ENCODE measurements at regions of chr2 and their contacts with region 1.

Region 1: DNA sequence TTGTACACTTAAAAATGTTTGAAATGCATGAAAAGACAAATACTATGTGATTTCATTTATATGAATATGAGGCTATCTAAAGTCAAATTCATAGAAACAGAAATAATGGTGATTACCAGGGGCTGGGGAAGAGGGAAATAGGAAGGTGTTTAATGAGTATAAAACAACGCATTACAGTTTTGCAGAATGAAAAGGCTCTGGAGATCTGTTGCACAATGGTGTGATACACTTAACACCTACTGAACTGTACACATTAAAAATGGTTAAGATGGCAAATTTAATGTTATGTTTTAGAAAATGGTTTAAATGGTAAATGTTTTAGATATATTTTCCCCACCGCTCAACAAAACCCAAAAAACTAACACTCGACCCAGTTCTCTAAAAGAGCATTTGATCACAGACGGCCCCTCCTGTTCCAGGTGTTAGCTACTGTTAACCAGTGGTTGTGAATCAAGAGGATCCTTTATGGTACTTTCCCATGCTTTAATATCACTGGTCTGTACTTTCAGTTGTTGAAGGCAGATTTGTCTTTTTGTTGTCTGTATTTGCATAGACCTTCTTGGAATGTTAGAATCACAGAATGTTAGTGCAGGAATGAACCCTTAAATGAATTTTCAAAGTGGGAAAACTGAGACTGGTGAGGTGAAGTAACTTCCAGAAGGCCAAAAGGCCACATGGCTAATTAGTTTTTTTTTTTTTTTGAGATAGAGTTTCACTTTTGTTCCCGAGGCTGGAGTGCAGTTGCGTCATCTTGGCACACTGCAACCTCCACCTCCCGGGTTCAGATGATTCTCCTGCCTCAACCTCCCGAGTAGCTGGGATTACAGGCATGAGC is 10.2 kb downstream of the RAB10 start:
- DNase-seq: no peak
- ATAC-seq: peak; percentile 86
- H3K4me3 ChIP-seq: peak overlapping the region; percentile 55; the same call in 1 of the 2 replicates
- H3K27ac ChIP-seq: peak overlapping the region; percentile 76
- H3K4me1 ChIP-seq: peaks cover 6% of the 10 kb centered on the region; the same call in 1 of the 2 replicates
- H3K27me3 ChIP-seq: no peaks in the 10 kb centered on the region
- CTCF ChIP-seq: no peak
- EP300 ChIP-seq: no peak
- POLR2A ChIP-seq: no peak
- RAD21 ChIP-seq: no peak

Region 2: GRCh38 chr2:26068602-26069298 is 24.7 kb after region 1 on chr2:
- CTCF ChIA-PET with region 1: interaction called, 4 read pairs
- POLR2A ChIA-PET with region 1: no interaction called
- RAD21 ChIA-PET with region 1: interaction called, 3 read pairs
- SMC1A ChIA-PET with region 1: interaction called, 9 read pairs
- in situ Hi-C with region 1: no loop called
- intact Hi-C with region 1: loop called (anchors 2 kb)
- DNase-seq: peak; percentile 84
- ATAC-seq: peak; percentile 96
- H3K4me3 ChIP-seq: peak overlapping the region; percentile 51; the same call in 1 of the 2 replicates
- H3K27ac ChIP-seq: peak overlapping the region; percentile 59
- H3K4me1 ChIP-seq: peaks cover 28% of the 10 kb centered on the region
- H3K27me3 ChIP-seq: no peaks in the 10 kb centered on the region
- CTCF ChIP-seq: no peak
- EP300 ChIP-seq: peak in 1 of 2 experiments; percentile 80; a peak in 2 of 4 replicates
- POLR2A ChIP-seq: no peak
- RAD21 ChIP-seq: no peak

Measured in GM12878 (cell line).